ENCODE measurements at regions of chr1 and their contacts with region 1.

Region 1: GRCh38 chr1:113849060-113849459 is 22.5 kb downstream of the PTPN22 start:
- DNase-seq: no peak
- ATAC-seq: no peak
- H3K4me3 ChIP-seq: no peak overlapping the region
- H3K27ac ChIP-seq: no peak overlapping the region
- H3K4me1 ChIP-seq: peaks cover 0 to 4% (median 0%) of the 10 kb centered on the region in 9 donors
- H3K27me3 ChIP-seq: no peaks in the 10 kb centered on the region
- CTCF ChIP-seq: no peak

Region 2: DNA sequence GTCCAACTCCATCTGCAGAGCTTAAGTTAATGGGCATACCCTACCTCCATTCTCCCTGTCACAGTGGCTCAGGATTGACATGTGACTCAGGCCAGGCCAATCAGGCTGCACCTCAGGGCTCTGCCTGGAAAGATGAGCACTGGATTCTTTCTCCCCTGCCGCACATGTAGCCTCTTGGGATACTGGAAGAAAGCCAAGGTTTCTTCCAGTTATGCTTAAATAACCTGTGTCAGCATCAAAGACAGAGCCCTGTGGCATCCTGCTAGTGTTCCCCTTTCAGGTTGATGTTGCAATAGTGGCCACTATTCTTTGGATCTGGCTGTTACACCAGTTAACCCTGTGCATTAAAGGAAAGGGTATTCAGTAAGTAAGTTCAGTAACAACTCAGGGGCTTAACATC is 359.7 kb after region 1 on chr1:
- intact Hi-C with region 1: loop called in 1 of 10 experiments (anchors 10 kb)
- DNase-seq: no peak
- ATAC-seq: peak in 5 of 8 donors; percentile 20 to 82 (median 57)
- H3K4me3 ChIP-seq: no peak overlapping the region
- H3K27ac ChIP-seq: no peak overlapping the region
- H3K4me1 ChIP-seq: no peaks in the 10 kb centered on the region
- H3K27me3 ChIP-seq: peaks cover 0 to 46% (median 30%) of the 10 kb centered on the region in 7 donors
- CTCF ChIP-seq: no peak

Measured in heart right ventricle (tissue), 16 donors.